Left cardiac atrium (tissue), 4 donors: ENCODE measurements at regions of chr3 and their contacts with region 1.

Region 1: DNA sequence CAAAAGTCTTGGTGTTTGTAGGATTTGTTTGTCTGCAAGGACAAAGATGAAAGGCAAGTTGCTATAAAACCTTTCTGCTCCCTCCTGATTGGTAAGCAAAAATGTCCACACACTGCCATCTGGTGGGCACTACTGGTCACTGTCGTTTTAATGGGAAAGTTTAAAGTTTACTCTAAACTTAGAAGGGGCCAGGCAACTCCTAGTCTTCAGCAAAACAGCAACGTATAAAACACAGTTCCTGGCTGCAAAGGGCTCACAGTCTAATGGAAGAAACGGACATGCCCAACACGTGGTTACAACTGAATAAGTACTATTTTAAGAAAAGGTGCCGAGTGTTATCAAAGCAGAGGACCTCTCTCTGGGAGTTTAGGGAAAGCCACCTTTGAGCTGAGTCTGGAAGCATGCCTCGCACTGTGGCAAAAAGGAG is 23.7 kb upstream of the TPRG1 start:
- DNase-seq: peak; percentile 54
- ATAC-seq: peak; percentile 68 to 78

Region 2: GRCh38 chr3:187738331-187739093 is 1409.6 kb before region 1 on chr3:
- intact Hi-C with region 1: loop called (anchors 2 to 10 kb)
- DNase-seq: peak; percentile 90
- ATAC-seq: peak; percentile 67 to 77